K562 (cell line): ENCODE measurements at regions of chr15 and their contacts with region 1.

Region 1: DNA sequence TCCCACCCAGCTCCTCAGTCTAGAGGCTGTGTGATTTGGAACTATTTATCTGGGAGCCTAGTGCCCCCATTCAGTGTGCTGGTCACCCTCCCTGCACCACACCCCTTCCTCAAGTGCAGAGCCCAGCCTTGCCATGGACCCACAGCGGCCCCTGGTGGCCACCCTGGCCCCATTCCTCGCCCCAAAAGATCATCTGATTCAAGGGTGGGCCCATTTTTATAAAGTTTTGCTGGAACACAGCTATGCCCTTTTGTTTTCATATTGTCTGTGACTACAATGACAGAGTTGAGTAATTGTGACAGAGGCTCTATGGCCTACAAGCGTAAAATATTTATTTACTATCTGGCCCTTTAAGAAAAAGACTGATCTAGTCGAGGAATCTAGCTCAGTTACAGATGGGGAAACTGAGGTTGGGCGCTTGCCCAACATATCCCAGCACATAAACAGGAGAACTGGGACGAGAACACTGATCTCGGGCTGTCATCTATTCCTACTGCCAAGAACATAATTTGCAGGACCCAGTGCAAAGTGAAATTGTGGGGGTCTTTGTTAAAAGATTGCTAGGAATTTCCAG is 1.8 kb downstream of the FES start:
- DNase-seq: peak; percentile 76 to 84 (median 78)
- ATAC-seq: peak; percentile 79
- H3K4me3 ChIP-seq: no peak overlapping the region
- H3K27ac ChIP-seq: no peak overlapping the region; the same call in 2 of the 3 replicates
- H3K4me1 ChIP-seq: peaks cover 10 to 74% of the 10 kb centered on the region in 2 experiments; a peak in 4 of 5 replicates
- H3K27me3 ChIP-seq: no peaks in the 10 kb centered on the region
- CTCF ChIP-seq: peak; percentile 94 to 99 (median 96)
- EP300 ChIP-seq: no peak
- POLR2A ChIP-seq: no peak
- RAD21 ChIP-seq: peak; percentile 98 to 99

Region 2: DNA sequence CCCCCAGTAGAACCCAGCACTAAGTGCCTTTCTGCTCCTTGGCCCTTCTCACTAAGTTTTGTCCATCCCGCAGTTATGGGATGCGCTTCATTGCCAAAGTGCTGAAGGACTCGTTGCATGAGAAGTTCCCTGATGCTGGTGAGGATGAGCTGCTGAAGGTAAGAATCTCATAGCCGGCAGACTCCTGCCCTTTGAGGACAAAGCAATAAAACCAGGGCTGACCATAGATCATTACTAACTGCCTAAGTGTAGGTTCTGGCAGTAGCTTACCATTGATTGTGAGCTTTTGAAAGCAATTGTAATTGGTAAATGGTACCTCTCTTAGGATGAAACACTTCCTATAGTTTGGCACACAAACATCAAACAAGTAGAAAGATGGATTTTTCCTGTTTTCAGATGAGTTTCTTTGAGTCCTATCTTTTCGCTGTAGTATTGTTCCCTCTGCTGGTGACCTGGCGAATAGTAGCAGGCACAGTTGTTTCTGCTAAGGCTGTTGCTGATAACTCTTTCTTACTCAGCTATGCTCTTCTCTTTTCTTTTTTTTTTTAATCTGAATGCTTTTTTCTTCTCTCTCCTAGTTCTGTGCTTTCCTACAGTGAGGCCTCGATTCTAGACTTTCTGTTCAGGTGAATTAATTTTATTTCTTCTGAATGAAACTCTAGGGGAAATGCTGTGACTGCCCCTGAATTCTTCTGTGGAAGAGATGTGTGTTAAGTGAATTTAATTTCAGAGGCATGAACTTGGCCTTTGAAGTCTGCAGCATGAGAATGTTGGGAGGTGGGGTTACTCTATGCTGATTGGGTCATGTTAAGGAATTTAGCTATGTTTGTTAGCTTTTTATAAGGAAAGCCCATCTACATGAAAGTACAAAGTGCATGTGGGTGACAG is 403.8 kb before region 1 on chr15:
- CTCF ChIA-PET with region 1: no interaction called
- POLR2A ChIA-PET with region 1: no interaction called
- in situ Hi-C with region 1: no loop called
- intact Hi-C with region 1: loop called (anchors 5 kb)
- DNase-seq: peak; percentile 19 to 68 (median 38)
- ATAC-seq: peak; percentile 88
- H3K4me3 ChIP-seq: no peak overlapping the region
- H3K27ac ChIP-seq: no peak overlapping the region
- H3K4me1 ChIP-seq: no peaks in the 10 kb centered on the region
- H3K27me3 ChIP-seq: no peaks in the 10 kb centered on the region
- CTCF ChIP-seq: peak; percentile 82 to 91 (median 85)
- EP300 ChIP-seq: 0 out of 2 replicates have a peak, but pooled peaks have one; percentile 3
- POLR2A ChIP-seq: no peak
- RAD21 ChIP-seq: peak; percentile 90 to 96

Region 3: GRCh38 chr15:90648137-90649070 is 237.7 kb before region 1 on chr15:
- CTCF ChIA-PET with region 1: interaction called, 11 read pairs
- POLR2A ChIA-PET with region 1: interaction called, 4 read pairs
- in situ Hi-C with region 1: loop called (anchors 5 kb)
- intact Hi-C with region 1: loop called (anchors 1 kb)
- DNase-seq: peak; percentile 67 to 97 (median 76)
- ATAC-seq: peak; percentile 83
- H3K4me3 ChIP-seq: no peak overlapping the region
- H3K27ac ChIP-seq: peak overlapping the region; percentile 97
- H3K4me1 ChIP-seq: peaks cover 33 to 38% of the 10 kb centered on the region in 2 experiments
- H3K27me3 ChIP-seq: no peaks in the 10 kb centered on the region
- CTCF ChIP-seq: peak; percentile 82 to 94 (median 88)
- EP300 ChIP-seq: peak; percentile 89
- POLR2A ChIP-seq: peak; percentile 92
- RAD21 ChIP-seq: peak; percentile 96

Region 4: DNA sequence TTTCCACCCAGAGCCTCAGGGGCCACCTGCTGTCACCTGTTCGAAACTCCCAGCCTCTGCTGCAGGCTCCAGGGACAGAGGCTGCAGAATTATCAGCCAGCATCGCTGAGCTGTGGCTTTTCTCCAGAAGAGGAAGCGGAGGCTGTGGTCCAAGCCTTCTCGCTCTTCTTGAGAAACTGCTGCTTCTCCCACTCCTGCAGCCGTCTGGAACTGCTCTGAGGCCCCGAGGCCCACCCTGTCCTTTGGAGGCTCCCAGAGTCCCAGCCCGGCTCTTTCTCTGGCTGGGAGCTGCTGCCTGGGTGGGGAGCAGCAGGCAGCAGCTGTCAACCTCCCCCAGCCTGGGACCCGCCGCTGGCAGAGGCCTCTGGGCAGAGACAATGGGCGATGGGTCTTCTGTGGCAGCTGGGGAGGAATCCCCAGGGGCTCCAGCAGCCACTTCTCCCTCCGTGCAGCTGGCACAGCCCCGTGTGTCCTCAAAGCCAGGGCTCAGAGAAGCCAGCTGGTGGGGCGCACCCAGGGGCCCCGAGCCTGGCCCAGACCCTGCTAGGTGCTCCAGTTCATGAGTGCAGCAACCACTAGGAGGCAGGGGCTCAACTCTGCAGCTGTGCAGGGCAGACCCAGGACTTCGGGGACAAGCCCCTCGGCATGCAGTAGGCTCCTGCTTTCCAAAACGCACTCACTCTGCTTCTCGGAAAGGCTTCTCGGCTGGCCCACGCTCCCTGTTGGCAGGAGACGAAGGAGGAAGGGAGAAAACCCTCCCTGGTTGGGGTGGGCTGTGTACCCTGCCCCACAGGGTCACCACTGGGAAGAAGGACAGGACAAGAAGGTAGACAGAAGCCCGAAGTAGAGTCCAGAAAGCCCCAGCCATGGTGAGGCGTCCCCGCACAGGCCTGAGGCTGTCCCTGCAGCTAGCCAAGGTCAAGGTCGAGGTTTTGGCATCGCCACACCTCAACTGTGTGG is 67.6 kb before region 1 on chr15:
- CTCF ChIA-PET with region 1: interaction called, 3 read pairs
- POLR2A ChIA-PET with region 1: interaction called, 3 read pairs
- in situ Hi-C with region 1: no loop called
- intact Hi-C with region 1: loop called (anchors 5 kb)
- DNase-seq: peak in 3 of 4 experiments; percentile 35 to 49 (median 42)
- ATAC-seq: peak; percentile 75
- H3K4me3 ChIP-seq: no peak overlapping the region
- H3K27ac ChIP-seq: no peak overlapping the region
- H3K4me1 ChIP-seq: peaks cover 8 to 35% of the 10 kb centered on the region in 2 experiments; a peak in 4 of 5 replicates
- H3K27me3 ChIP-seq: no peaks in the 10 kb centered on the region
- CTCF ChIP-seq: peak; percentile 32 to 46 (median 44); a peak in 5 of 6 replicates
- EP300 ChIP-seq: no peak
- POLR2A ChIP-seq: no peak
- RAD21 ChIP-seq: peak in 1 of 2 experiments; percentile 41; a peak in 2 of 4 replicates

Region 5: GRCh38 chr15:90840954-90841353 is 45.2 kb before region 1 on chr15:
- CTCF ChIA-PET with region 1: no interaction called
- POLR2A ChIA-PET with region 1: no interaction called
- in situ Hi-C with region 1: no loop called
- intact Hi-C with region 1: no loop called
- DNase-seq: peak; percentile 95 to 98 (median 96)
- ATAC-seq: peak; percentile 90
- H3K4me3 ChIP-seq: no peak overlapping the region
- H3K27ac ChIP-seq: peak overlapping the region; percentile 88
- H3K4me1 ChIP-seq: peaks cover 60 to 70% of the 10 kb centered on the region in 2 experiments
- H3K27me3 ChIP-seq: no peaks in the 10 kb centered on the region
- CTCF ChIP-seq: no peak
- EP300 ChIP-seq: peak; percentile 99
- POLR2A ChIP-seq: no peak
- RAD21 ChIP-seq: peak; percentile 33 to 39